Psoas muscle (tissue), 8 donors: ENCODE measurements at regions of chr10 and their contacts with region 1.

Region 1: DNA sequence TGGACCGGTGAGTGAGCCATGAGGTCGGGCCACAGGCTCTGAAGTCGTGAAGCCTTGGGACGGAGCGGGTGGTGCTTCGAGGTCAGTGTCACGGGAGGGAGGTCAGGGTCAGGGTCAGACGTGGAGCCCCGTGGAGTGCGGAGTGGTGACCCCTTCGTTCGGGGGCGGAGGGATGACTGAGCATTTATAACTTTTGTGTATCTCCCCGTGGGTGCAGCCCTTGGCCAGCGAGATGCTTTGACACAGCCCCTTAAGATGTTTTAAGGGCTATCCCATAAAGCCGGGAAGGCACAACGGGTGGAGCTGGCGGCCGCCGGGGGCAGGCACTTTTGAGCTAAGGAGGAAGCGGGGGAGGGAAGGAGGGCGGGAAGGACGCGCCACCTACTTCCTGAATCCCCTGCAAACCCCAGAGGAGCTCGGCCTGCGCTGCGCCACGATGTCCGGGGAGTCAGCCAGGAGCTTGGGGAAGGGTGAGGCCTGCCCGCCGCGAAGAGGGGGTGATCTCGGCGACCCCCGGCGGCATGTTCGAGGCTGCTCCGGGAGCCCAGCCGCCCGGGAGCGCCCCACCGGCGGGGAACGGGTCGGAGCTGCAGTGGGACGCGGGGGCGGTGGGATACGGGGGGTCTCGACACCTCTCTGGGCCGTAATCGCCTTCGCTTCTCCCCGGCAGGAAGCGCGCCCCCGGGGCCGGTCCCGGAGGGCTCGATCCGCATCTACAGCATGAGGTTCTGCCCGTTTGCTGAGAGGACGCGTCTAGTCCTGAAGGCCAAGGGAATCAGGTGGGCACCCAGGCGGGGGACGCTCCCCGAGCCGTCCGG is at the start of gene GSTO1:
- DNase-seq: peak; percentile 83 to 89
- ATAC-seq: peak; percentile 72 to 84 (median 76)
- H3K4me3 ChIP-seq: peak within 1 kb of the TSS; percentile 94
- H3K27ac ChIP-seq: peak within 1 kb of the TSS; percentile 99
- H3K4me1 ChIP-seq: peaks cover 31% of the 10 kb centered on the region
- H3K27me3 ChIP-seq: no peaks in the 10 kb centered on the region
- CTCF ChIP-seq: no peak
- total RNA-seq, gene GSTO1: 95.9 to 222 (median 114) TPM

Region 2: DNA sequence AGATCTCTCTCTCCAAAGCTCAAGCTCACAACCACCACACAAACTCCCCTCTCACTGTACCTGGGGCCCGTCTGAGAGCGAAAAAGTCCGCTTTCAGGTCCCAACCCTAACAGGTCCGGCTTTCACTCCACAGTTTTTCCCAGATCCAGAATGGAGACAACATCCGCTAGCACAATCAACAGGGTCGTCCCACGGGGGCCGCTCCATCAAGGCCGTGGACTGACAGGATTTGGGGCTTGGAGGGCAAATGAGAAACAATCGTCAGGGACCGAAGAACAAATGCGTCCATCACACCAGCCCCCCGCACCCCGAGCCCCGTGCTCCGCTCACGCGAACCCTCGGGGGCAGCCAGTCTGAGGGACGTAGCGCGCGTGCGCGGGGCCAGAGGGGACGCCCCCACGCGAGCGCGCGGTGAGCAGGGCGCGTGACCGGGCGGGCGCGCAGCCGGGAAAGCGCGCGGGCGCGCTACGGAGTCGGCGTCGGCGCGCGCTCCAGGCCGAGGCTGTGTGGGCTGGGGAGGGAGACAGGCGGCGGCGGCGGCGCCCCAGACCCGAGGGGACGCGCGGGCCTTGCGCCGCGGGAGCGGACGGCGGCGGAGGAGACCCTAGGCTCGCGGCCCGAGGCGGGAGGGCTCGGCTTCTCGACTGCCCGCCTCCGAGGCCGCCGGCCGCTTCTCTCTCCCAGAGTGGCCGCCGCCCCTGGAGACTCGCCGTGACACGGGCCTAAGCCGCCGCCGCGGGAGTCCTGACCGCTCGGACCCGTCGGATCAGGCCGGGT is 287.8 kb before region 1 on chr10 and contains the start of gene SLK:
- intact Hi-C with region 1: no loop called
- DNase-seq: peak; percentile 89 to 93
- ATAC-seq: peak; percentile 96 to 98 (median 98)
- H3K4me3 ChIP-seq: peak within 1 kb of the TSS; percentile 97
- H3K27ac ChIP-seq: peak within 1 kb of the TSS; percentile 95
- H3K4me1 ChIP-seq: peaks cover 25% of the 10 kb centered on the region
- H3K27me3 ChIP-seq: no peaks in the 10 kb centered on the region
- CTCF ChIP-seq: no peak
- total RNA-seq, gene SLK: 36.6 to 48.6 (median 41.0) TPM

Region 3: DNA sequence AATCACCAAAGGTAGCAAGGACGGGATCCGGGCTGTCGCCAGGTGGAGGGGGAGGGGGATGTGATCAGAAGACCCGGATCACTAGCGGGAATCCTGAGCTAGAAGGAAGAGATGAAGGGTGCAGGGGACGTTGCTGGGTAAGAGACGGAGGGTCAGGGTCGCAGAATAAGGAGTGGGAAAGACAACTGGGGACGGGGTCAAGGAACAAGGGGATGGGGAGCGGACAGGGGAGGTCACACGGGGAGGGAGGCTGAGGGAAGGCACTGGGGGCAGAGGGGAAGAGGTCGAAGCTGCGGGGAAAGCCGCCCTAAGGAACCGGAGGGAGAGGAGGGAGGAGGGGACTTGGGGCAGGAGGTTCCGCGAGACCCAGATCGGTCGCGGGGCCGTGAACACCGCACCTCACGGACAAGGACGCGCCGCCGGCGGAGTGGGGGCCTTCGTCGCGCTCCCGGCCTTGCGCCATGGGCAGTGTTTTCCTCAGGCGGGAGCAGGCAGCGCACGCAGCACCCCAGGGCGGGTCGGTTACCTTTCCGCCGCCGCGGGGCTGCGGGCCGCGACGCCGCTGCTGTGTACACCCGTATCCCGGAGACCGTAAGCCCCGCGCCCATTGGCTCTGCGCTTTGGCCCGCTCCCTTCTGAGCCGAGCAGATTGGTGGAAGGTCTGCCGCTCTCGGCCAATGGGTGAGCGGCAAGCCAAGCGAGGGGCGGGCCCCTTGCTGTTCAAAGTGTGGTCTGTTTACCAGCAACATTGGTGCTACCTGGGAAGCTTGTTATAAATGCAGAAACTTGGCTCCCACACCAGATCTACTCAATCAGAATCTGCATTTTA is 22.7 kb before region 1 on chr10 and contains the start of gene CFAP43:
- intact Hi-C with region 1: loop called in 1 of 2 experiments (anchors 1 kb)
- DNase-seq: peak; percentile 98 to 99
- ATAC-seq: peak; percentile 100
- H3K4me3 ChIP-seq: peak within 1 kb of the TSS; percentile 92
- H3K27ac ChIP-seq: no peak within 1 kb of the TSS
- H3K4me1 ChIP-seq: peaks cover 7% of the 10 kb centered on the region
- H3K27me3 ChIP-seq: no peaks in the 10 kb centered on the region
- CTCF ChIP-seq: no peak
- total RNA-seq, gene CFAP43: 0.04 TPM in 1 of 4 donors, not detected in the others